PC-9 (cell line): ENCODE measurements at regions of chr1 and their contacts with region 1.

Region 1: GRCh38 chr1:191101960-191102359 is 624.3 kb upstream of the BRINP3 start:
- DNase-seq: no peak
- H3K4me3 ChIP-seq: no peak overlapping the region
- H3K27ac ChIP-seq: no peak overlapping the region
- H3K4me1 ChIP-seq: no peaks in the 10 kb centered on the region
- H3K27me3 ChIP-seq: no peaks in the 10 kb centered on the region
- CTCF ChIP-seq: no peak

Region 2: DNA sequence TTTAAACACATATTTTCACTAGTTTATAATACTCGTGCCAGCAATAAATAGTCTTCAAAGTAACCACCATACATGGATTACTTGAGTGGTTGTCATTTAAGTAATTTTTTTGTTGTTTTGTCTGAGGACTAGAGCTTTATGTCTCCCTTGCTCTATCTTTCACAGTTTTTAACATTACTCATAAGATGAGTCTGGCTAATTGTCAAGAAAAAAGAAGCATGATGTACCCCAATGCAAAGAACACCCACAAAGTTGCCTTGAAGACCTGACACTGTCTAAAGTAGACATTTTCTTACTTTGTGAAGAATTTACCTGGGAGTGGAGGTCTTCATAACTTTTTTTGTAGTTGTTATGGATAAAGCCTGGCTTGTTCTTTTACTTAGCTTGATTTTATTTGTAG is 413.9 kb before region 1 on chr1:
- CTCF ChIA-PET with region 1: no interaction called
- POLR2A ChIA-PET with region 1: no interaction called
- intact Hi-C with region 1: no loop called
- DNase-seq: no peak
- H3K4me3 ChIP-seq: no peak overlapping the region
- H3K27ac ChIP-seq: no peak overlapping the region
- H3K4me1 ChIP-seq: no peaks in the 10 kb centered on the region
- H3K27me3 ChIP-seq: no peaks in the 10 kb centered on the region
- CTCF ChIP-seq: no peak

Region 3: DNA sequence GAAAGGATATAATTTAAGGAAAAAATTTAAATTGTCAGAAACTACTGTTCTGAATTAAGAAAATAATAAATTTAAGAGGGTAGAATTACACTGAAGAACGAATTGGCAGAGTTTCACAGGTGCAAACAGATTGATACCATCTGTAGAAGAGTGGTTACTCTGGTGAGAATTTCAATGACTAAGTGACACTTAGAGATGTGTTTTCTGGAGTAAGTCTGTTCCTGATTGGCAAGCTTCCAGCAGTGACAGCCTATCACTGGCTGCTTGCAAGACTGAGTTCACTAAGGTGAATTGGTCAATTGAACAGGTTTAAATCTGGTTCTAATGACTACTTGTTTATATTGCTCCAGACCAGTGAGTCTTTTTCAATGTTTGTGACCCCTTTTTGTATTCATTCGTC is 218.1 kb after region 1 on chr1:
- CTCF ChIA-PET with region 1: no interaction called
- POLR2A ChIA-PET with region 1: interaction called, 11 read pairs
- intact Hi-C with region 1: no loop called
- DNase-seq: peak in 1 of 2 experiments; percentile 10
- H3K4me3 ChIP-seq: no peak overlapping the region
- H3K27ac ChIP-seq: no peak overlapping the region
- H3K4me1 ChIP-seq: no peaks in the 10 kb centered on the region
- H3K27me3 ChIP-seq: no peaks in the 10 kb centered on the region
- CTCF ChIP-seq: no peak